ENCODE measurements at regions of chr7 and their contacts with region 1.

Region 1: GRCh38 chr7:129091484-129092002 is 36.6 kb upstream of the TNPO3 start:
- DNase-seq: peak; percentile 89
- H3K4me3 ChIP-seq: no peak overlapping the region
- H3K27ac ChIP-seq: no peak overlapping the region
- H3K4me1 ChIP-seq: peaks cover 0 to 3% (median 0%) of the 10 kb centered on the region in 4 donors
- H3K27me3 ChIP-seq: no peaks in the 10 kb centered on the region
- CTCF ChIP-seq: peak; percentile 94 to 99 (median 96)
- EP300 ChIP-seq: no peak
- POLR2A ChIP-seq: no peak

Region 2: GRCh38 chr7:128904381-128905197 is 187.0 kb before region 1 on chr7:
- in situ Hi-C with region 1: loop called in 3 of 4 experiments (anchors 10 kb)
- intact Hi-C with region 1: loop called (anchors 5 kb)
- DNase-seq: peak; percentile 9
- H3K4me3 ChIP-seq: no peak overlapping the region
- H3K27ac ChIP-seq: no peak overlapping the region
- H3K4me1 ChIP-seq: peaks cover 0 to 8% (median under 1%) of the 10 kb centered on the region in 4 donors
- H3K27me3 ChIP-seq: peaks cover 19% of the 10 kb centered on the region
- CTCF ChIP-seq: peak; percentile 51 to 62 (median 61)
- EP300 ChIP-seq: no peak
- POLR2A ChIP-seq: no peak

Region 3: GRCh38 chr7:128954830-128955802 is 136.4 kb before region 1 on chr7:
- in situ Hi-C with region 1: loop called in 1 of 4 experiments (anchors 25 kb)
- intact Hi-C with region 1: no loop called
- DNase-seq: no peak
- H3K4me3 ChIP-seq: no peak overlapping the region
- H3K27ac ChIP-seq: no peak overlapping the region
- H3K4me1 ChIP-seq: no peaks in the 10 kb centered on the region
- H3K27me3 ChIP-seq: no peaks in the 10 kb centered on the region
- CTCF ChIP-seq: no peak
- EP300 ChIP-seq: no peak
- POLR2A ChIP-seq: no peak

Measured in transverse colon (tissue), 4 donors.